ENCODE measurements at regions of chr19 and their contacts with region 1.

Region 1: DNA sequence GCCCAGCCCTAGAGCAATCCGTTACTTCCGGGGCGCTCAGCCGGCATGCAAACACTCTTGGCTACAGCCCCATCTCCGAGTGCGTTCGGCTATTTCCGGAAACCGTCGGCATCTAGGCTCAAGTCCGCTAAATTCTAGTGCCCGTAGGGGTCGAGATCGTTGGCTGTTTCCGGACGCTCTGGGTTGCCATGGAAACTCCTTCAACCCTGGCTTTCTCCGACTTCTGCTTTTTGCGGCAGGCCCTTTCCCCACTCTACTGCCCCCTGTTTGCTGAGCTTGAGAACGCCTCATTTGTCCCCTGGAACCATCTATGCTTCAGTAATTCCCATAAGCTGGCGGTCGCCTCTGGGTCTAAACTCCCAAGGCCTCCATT is 533 bp upstream of the PIK3R2 start:
- DNase-seq: peak; percentile 100
- ATAC-seq: peak; percentile 79
- H3K4me3 Mint-ChIP-seq: peak overlapping the region; percentile 84
- H3K27ac Mint-ChIP-seq: peak overlapping the region; percentile 98
- H3K4me1 Mint-ChIP-seq: peaks cover 23% of the 10 kb centered on the region
- H3K27me3 Mint-ChIP-seq: no peaks in the 10 kb centered on the region

Region 2: DNA sequence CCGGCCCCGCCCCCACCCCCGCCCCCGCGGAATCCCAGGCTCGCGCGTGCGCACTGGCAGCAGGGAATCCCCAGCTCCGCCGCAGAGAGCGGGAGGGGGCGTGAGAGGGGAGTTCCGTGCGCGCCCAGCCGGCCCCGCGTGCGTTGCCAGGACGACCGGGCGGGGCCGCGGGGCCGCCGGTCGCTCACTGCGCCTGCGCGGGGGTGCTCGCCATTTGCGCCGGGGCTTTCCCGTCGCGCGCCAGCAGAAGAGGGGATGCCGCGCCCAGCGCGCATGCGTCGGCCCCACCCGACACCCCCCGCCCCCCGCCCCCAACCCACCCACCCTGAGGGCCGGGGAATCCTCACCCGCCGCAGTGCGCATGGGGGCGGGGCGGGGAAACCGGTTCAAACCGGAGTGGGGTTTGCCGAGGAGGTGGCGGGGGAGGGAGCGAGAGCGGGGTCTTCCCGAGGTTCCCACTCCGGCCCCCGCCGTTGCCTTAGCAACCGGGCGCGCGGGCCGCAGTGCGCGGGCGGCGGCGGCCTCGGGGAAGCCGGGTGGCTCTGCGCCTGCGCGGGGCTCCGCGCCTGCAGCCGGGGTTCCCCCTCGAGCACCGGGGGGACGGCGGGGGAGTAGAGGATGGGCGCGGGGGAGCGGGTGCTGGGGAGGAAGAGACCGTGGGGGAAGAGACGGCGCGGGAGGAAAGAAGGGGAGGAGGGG is 204.5 kb before region 1 on chr19:
- CTCF ChIA-PET with region 1: interaction called, 5 read pairs
- POLR2A ChIA-PET with region 1: no interaction called
- intact Hi-C with region 1: loop called in 1 of 2 experiments (anchors 1 kb)
- DNase-seq: peak; percentile 98
- ATAC-seq: peak; percentile 61
- H3K4me3 Mint-ChIP-seq: peak overlapping the region; percentile 70
- H3K27ac Mint-ChIP-seq: no peak overlapping the region
- H3K4me1 Mint-ChIP-seq: peaks cover 50% of the 10 kb centered on the region
- H3K27me3 Mint-ChIP-seq: peaks cover 33% of the 10 kb centered on the region

Region 3: GRCh38 chr19:18021121-18021755 is 131.2 kb before region 1 on chr19:
- CTCF ChIA-PET with region 1: no interaction called
- POLR2A ChIA-PET with region 1: no interaction called
- intact Hi-C with region 1: loop called in 1 of 2 experiments (anchors 2 kb)
- DNase-seq: peak; percentile 80
- ATAC-seq: peak; percentile 31
- H3K4me3 Mint-ChIP-seq: peak overlapping the region; percentile 70
- H3K27ac Mint-ChIP-seq: peak overlapping the region; percentile 90
- H3K4me1 Mint-ChIP-seq: peaks cover 60% of the 10 kb centered on the region
- H3K27me3 Mint-ChIP-seq: no peaks in the 10 kb centered on the region

Region 4: DNA sequence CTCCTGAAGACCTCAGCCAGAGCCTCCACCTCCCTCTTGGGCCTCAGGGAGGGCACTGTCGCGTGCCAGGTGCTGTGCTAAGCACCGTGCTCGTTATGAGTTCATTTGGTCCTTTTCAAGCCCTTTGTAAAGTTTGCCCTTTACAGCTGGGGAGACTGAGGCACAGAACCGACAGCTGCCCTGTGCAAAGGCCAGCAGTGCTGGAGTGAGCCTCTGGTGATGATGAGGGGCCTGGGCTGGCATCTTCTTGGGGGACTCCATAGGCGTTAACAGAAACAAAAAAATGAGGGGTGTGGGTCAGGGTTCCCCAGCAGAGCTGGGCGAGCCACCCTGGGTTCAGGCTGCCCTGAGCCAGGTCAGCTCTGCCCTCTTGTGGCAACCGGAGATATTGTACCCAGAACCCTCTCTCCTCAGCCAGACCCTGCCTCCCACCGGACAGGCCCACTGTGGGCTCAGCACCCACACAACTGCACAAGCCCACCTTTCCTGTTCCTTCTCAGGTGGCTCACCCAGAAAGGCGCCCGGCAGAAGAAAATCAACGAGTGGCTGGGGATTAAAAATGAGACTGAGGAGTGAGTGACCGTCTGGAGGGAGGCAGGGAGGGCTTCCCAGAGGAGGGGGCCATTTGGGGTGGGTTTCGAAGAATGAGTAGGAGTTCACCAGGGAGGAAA is 15.7 kb after region 1 on chr19:
- CTCF ChIA-PET with region 1: interaction called, 7 read pairs
- POLR2A ChIA-PET with region 1: interaction called, 4 read pairs
- intact Hi-C with region 1: loop called (anchors 1 to 2 kb)
- DNase-seq: peak; percentile 81
- ATAC-seq: peak; percentile 95
- H3K4me3 Mint-ChIP-seq: no peak overlapping the region
- H3K27ac Mint-ChIP-seq: no peak overlapping the region
- H3K4me1 Mint-ChIP-seq: peaks cover 4% of the 10 kb centered on the region
- H3K27me3 Mint-ChIP-seq: no peaks in the 10 kb centered on the region

Region 5: DNA sequence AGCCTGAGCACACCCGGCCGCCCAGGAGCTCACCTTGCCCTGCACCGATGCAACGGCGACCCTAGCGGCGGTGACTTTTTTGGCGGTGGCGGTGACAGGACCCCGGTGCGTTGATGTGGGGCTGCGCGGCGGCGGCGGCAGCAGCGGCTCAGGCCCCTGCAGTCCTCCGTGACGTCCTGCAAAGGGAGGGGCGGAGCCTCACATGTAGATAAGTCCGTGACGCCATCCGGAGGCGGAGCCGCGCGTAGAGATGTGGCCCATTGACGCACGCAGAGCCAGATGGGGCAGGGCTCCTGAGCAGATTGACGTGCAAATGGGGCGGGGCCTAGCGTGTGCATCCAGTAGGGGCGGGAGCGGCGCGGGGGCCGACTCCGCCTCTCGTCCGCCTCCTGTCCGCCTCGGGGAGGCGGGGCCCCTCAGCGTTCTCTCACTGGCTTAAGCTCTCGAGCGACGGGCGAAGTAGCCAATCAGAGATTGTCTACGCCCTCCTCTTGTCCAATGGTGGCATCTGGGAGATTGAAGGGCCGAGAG is 51.5 kb after region 1 on chr19 and contains the start of gene RAB3A:
- CTCF ChIA-PET with region 1: no interaction called
- POLR2A ChIA-PET with region 1: no interaction called
- intact Hi-C with region 1: loop called in 1 of 2 experiments (anchors 1 kb)
- DNase-seq: peak; percentile 100
- ATAC-seq: peak; percentile 94
- H3K4me3 Mint-ChIP-seq: peak within 1 kb of the TSS; percentile 96
- H3K27ac Mint-ChIP-seq: peak within 1 kb of the TSS; percentile 90
- H3K4me1 Mint-ChIP-seq: peaks cover 18% of the 10 kb centered on the region
- H3K27me3 Mint-ChIP-seq: no peaks in the 10 kb centered on the region
- total RNA-seq, gene RAB3A: 5.6 to 8.9 TPM

Region 6: GRCh38 chr19:18419195-18419698 is 266.8 kb after region 1 on chr19 and contains the start of gene SSBP4:
- CTCF ChIA-PET with region 1: no interaction called
- POLR2A ChIA-PET with region 1: no interaction called
- intact Hi-C with region 1: loop called in 1 of 2 experiments (anchors 1 kb)
- DNase-seq: peak; percentile 82
- ATAC-seq: peak; percentile 45
- H3K4me3 Mint-ChIP-seq: peak within 1 kb of the TSS; percentile 90
- H3K27ac Mint-ChIP-seq: peak within 1 kb of the TSS; percentile 80
- H3K4me1 Mint-ChIP-seq: peaks cover 79% of the 10 kb centered on the region
- H3K27me3 Mint-ChIP-seq: peaks cover 23% of the 10 kb centered on the region
- total RNA-seq, gene SSBP4: 71.7 to 79.3 TPM